WTC11 (cell line): ENCODE measurements at regions of chr11 and their contacts with region 1.

Region 1: DNA sequence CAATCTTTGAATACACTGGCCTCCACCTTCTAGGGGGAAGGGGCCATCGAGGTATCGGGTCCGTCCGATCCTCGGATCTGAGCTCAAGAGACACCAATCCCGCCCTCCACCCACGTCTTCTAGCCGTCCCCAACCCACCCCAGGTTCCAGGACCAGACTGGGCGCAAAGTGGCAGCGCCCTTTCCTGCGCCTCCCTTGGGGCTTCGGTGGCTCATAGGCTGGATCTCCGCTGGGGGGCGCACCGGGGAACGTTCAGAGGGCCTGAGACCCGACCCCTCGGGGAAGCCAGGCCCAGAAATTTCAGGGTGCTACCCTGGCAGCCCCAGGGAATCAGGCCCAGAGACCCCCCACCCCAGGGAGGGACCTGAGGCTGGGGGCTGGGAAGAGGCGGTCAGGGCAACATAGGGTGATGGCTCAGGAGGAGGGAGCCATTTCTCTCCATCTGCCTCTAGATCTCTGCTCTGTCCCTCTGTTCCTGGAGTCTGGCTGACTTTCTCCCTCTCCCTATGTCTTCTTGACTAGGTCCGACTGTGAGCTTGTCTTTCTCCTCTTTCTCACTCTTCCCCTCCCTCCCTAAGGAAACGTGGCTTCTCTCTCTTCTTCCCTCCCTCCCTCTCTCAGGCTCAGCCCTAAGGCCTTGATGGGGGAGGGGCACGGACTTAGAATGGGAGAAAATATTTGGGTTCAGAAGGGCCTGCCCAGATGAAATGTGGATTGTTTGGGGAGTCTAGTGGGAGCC is 1.1 kb downstream of the CREB3L1 start:
- DNase-seq: peak; percentile 83
- ATAC-seq: peak; percentile 68
- H3K4me3 Mint-ChIP-seq: peak overlapping the region; percentile 79
- H3K27ac Mint-ChIP-seq: peak overlapping the region; percentile 26
- H3K4me1 Mint-ChIP-seq: peaks cover 41% of the 10 kb centered on the region
- H3K27me3 Mint-ChIP-seq: peaks cover 10% of the 10 kb centered on the region
- CTCF ChIP-seq: peak; percentile 53

Region 2: GRCh38 chr11:46265764-46266163 is 12.8 kb before region 1 on chr11:
- CTCF ChIA-PET with region 1: interaction called, 11 read pairs
- POLR2A ChIA-PET with region 1: no interaction called
- DNase-seq: no peak
- ATAC-seq: no peak
- H3K4me3 Mint-ChIP-seq: no peak overlapping the region
- H3K27ac Mint-ChIP-seq: no peak overlapping the region
- H3K4me1 Mint-ChIP-seq: peaks cover 6% of the 10 kb centered on the region
- H3K27me3 Mint-ChIP-seq: no peaks in the 10 kb centered on the region; the same call in 1 of the 2 replicates
- CTCF ChIP-seq: no peak

Region 3: GRCh38 chr11:46308631-46309419 is 30.3 kb after region 1 on chr11:
- CTCF ChIA-PET with region 1: interaction called, 42 read pairs
- POLR2A ChIA-PET with region 1: interaction called, 3 read pairs
- DNase-seq: peak; percentile 87
- ATAC-seq: peak; percentile 85
- H3K4me3 Mint-ChIP-seq: no peak overlapping the region
- H3K27ac Mint-ChIP-seq: 0 out of 2 replicates have a peak overlapping the region, but pooled peaks have one; percentile 27
- H3K4me1 Mint-ChIP-seq: peaks cover 19% of the 10 kb centered on the region
- H3K27me3 Mint-ChIP-seq: no peaks in the 10 kb centered on the region; the same call in 1 of the 2 replicates
- CTCF ChIP-seq: peak; percentile 85